ENCODE measurements at regions of chr19 and their contacts with region 1.

Region 1: GRCh38 chr19:47035127-47036096 is 13.0 kb downstream of the TMEM160 start:
- DNase-seq: peak; percentile 93 to 98 (median 94)
- H3K4me3 ChIP-seq: peak overlapping the region; percentile 36 to 44
- H3K4me3 Mint-ChIP-seq: peak overlapping the region; percentile 84 to 98 (median 88)
- H3K27ac ChIP-seq: no peak overlapping the region
- H3K27ac Mint-ChIP-seq: peak overlapping the region; percentile 73 to 90 (median 87)
- H3K4me1 ChIP-seq: peaks cover 23% of the 10 kb centered on the region
- H3K4me1 Mint-ChIP-seq: peaks cover 11 to 32% (median 21%) of the 10 kb centered on the region in 4 donors
- H3K27me3 ChIP-seq: no peaks in the 10 kb centered on the region
- H3K27me3 Mint-ChIP-seq: peaks cover 5 to 19% of the 10 kb centered on the region in 2 donors

Region 2: DNA sequence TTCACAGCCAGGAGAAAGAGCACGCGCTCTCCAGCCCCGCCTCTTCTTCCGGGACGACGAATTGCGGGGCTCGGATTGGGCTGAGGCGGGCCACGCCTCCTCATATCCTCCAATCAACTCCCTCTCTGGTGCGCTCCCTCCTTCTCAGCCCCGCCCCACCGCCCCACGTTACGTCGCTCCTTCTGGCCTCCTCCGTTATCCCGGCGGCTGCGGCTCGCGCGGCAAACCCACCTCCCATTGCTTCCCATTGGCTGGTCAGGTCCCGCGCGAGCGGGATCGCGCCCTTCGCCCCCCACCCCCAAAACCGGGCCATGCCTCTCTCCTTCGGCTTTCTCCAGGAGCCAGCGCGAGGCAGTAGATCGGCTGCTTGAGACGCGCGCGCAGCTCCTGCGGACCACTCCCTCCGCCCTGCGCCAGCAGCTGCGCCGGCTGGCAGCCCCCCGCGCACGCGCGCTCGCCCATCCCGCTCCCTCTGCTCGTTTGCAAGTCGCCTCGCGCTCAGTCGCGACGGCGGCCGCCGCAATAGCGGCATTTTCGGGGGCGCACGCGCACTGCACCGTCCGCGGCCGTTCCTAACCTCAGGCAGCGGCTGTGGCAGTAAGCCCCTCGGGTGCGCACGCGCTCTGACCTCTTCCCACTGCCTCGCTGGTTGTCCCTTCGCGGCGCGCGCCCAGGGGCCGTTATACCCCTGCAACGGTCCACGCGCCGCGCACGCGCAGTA is 175.1 kb before region 1 on chr19:
- CTCF ChIA-PET with region 1: interaction called, 5 read pairs
- POLR2A ChIA-PET with region 1: no interaction called
- intact Hi-C with region 1: loop called (anchors 1 kb)
- DNase-seq: peak; percentile 93 to 96 (median 94)
- H3K4me3 ChIP-seq: peak overlapping the region; percentile 42 to 78
- H3K4me3 Mint-ChIP-seq: peak overlapping the region; percentile 91 to 98 (median 95)
- H3K27ac ChIP-seq: peak overlapping the region; percentile 79
- H3K27ac Mint-ChIP-seq: peak overlapping the region; percentile 94 to 99 (median 97)
- H3K4me1 ChIP-seq: peaks cover 62% of the 10 kb centered on the region
- H3K4me1 Mint-ChIP-seq: peaks cover 19 to 22% (median 19%) of the 10 kb centered on the region in 4 donors
- H3K27me3 ChIP-seq: no peaks in the 10 kb centered on the region
- H3K27me3 Mint-ChIP-seq: no peaks in the 10 kb centered on the region

Region 3: GRCh38 chr19:47047763-47048405 is 12.5 kb after region 1 on chr19:
- CTCF ChIA-PET with region 1: interaction called, 7 read pairs
- POLR2A ChIA-PET with region 1: interaction called, 6 read pairs
- intact Hi-C with region 1: loop called (anchors 1 kb)
- DNase-seq: peak; percentile 59 to 82 (median 63)
- H3K4me3 ChIP-seq: peak overlapping the region; percentile 61 to 71
- H3K4me3 Mint-ChIP-seq: peak overlapping the region; percentile 95 to 98 (median 97)
- H3K27ac ChIP-seq: peak overlapping the region; percentile 68
- H3K27ac Mint-ChIP-seq: peak overlapping the region; percentile 67 to 98 (median 96)
- H3K4me1 ChIP-seq: peaks cover 13% of the 10 kb centered on the region
- H3K4me1 Mint-ChIP-seq: peaks cover 7 to 21% (median 14%) of the 10 kb centered on the region in 4 donors
- H3K27me3 ChIP-seq: no peaks in the 10 kb centered on the region
- H3K27me3 Mint-ChIP-seq: no peaks in the 10 kb centered on the region

Region 4: DNA sequence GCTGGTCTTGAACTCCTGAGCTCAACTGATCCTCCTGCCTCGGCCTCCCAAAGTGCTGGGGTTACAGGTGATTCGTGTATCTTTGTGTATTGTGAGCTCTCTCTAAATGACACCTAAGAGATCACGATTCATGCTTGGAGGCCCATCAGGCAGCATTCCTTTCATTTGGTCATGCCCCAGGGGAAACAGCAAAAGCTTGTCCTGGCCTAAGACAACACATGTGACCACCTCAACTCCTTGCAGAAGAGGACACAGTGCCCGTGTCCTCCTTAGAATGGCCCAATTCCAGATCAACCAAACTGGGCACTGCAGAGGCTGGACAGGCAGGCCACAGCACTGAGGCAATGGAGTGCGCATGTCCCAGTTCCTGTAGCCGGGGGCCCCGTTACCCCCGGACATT is 45.7 kb after region 1 on chr19:
- CTCF ChIA-PET with region 1: interaction called, 15 read pairs
- POLR2A ChIA-PET with region 1: interaction called, 5 read pairs
- intact Hi-C with region 1: no loop called
- DNase-seq: no peak
- H3K4me3 ChIP-seq: no peak overlapping the region
- H3K4me3 Mint-ChIP-seq: no peak overlapping the region
- H3K27ac ChIP-seq: no peak overlapping the region
- H3K27ac Mint-ChIP-seq: peak overlapping the region in 1 of 7 donors; percentile 24
- H3K4me1 ChIP-seq: no peaks in the 10 kb centered on the region
- H3K4me1 Mint-ChIP-seq: peaks cover 0 to 4% (median 0%) of the 10 kb centered on the region in 4 donors
- H3K27me3 ChIP-seq: no peaks in the 10 kb centered on the region
- H3K27me3 Mint-ChIP-seq: no peaks in the 10 kb centered on the region

Region 5: GRCh38 chr19:47094557-47095475 is 59.4 kb after region 1 on chr19:
- CTCF ChIA-PET with region 1: no interaction called
- POLR2A ChIA-PET with region 1: no interaction called
- intact Hi-C with region 1: no loop called
- DNase-seq: peak in 4 of 5 donors; percentile 33 to 50 (median 45)
- H3K4me3 ChIP-seq: peak overlapping the region in 1 of 2 donors; percentile 21
- H3K4me3 Mint-ChIP-seq: peak overlapping the region; percentile 10 to 82 (median 67)
- H3K27ac ChIP-seq: peak overlapping the region; percentile 77
- H3K27ac Mint-ChIP-seq: peak overlapping the region; percentile 94 to 98 (median 96)
- H3K4me1 ChIP-seq: peaks cover 42% of the 10 kb centered on the region
- H3K4me1 Mint-ChIP-seq: peaks cover 24 to 70% (median 44%) of the 10 kb centered on the region in 4 donors
- H3K27me3 ChIP-seq: no peaks in the 10 kb centered on the region
- H3K27me3 Mint-ChIP-seq: no peaks in the 10 kb centered on the region

Region 6: GRCh38 chr19:47124937-47125668 is 89.7 kb after region 1 on chr19:
- CTCF ChIA-PET with region 1: interaction called, 18 read pairs
- POLR2A ChIA-PET with region 1: interaction called, 5 read pairs
- intact Hi-C with region 1: loop called (anchors 1 kb)
- DNase-seq: peak in 4 of 5 donors; percentile 54 to 63 (median 60)
- H3K4me3 ChIP-seq: no peak overlapping the region
- H3K4me3 Mint-ChIP-seq: no peak overlapping the region
- H3K27ac ChIP-seq: no peak overlapping the region
- H3K27ac Mint-ChIP-seq: peak overlapping the region in 4 of 7 donors; percentile 30 to 77 (median 42)
- H3K4me1 ChIP-seq: no peaks in the 10 kb centered on the region
- H3K4me1 Mint-ChIP-seq: peaks cover 3 to 6% (median 6%) of the 10 kb centered on the region in 4 donors
- H3K27me3 ChIP-seq: no peaks in the 10 kb centered on the region
- H3K27me3 Mint-ChIP-seq: no peaks in the 10 kb centered on the region

Measured in CD4-positive, alpha-beta memory T cell (primary cell).